ENCODE measurements at regions of chr12 and their contacts with region 1.

Region 1: DNA sequence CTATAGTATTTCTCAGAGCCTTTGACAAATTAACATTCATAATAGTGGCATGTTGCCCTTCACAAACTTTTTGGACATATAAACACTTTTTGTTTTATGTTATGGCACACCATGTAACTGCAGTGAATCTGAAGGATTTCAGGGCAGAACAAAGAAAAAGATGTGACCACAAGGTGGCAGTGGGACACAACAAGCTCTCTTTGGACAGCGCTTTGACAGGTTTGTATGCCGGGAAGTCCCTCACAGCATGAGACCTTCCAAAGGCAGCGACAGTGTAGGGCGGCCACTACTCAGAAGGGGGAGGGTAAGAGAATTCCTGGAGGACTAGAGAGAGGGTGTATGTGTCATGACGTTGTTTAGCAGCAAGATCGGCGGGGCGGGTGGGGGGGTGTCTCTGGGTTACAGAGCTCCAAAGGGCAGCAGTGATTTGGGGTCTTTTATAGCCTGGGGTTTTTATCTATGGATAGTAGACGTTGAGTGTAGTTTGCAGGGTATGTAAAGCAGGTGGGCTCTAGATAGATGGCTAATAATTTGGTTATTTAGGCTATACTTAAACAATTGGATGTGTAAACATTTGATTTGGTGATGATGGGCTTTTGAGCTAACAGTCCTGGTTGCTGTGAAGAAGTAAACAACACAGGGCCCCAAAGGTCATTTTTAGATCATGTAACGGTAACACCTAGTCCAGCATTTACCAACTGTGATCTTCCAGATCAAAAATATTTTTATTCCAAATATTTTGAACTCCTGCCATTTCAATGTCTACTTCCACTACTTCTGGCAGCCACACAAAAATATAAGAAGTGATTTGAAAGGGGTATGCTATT is 22.9 kb downstream of the ETFBKMT start:
- DNase-seq: peak; percentile 89
- ATAC-seq: peak; percentile 71
- H3K4me3 ChIP-seq: no peak overlapping the region
- H3K4me3 Mint-ChIP-seq: peak overlapping the region; percentile 69
- H3K27ac ChIP-seq: peak overlapping the region; percentile 50 to 73
- H3K27ac Mint-ChIP-seq: peak overlapping the region; percentile 93
- H3K4me1 ChIP-seq: peaks cover 19 to 30% of the 10 kb centered on the region in 2 donors
- H3K4me1 Mint-ChIP-seq: peaks cover 31% of the 10 kb centered on the region
- H3K27me3 ChIP-seq: no peaks in the 10 kb centered on the region
- H3K27me3 Mint-ChIP-seq: no peaks in the 10 kb centered on the region
- CTCF ChIP-seq: peak; percentile 88

Region 2: DNA sequence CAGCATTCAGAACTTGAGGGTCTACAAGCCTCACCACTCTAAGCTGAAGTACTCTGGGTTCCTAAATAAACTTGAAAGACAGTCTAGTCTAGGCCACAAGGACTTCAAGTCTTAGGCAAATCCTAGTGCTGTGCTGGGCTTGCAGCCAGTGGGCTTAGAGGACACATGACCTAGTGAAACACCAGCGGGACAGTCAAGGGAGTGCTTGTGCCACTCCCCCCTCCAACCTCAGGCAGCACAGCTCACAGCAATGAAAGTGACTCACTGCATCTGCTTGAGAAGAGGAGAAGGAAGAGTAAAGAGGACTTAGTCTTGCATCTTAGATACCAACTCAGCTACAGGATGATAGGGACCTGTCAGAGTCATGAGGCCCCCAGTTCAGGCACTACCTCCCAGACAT is 1424.7 kb before region 1 on chr12:
- CTCF ChIA-PET with region 1: no interaction called
- POLR2A ChIA-PET with region 1: no interaction called
- intact Hi-C with region 1: no loop called
- DNase-seq: no peak
- ATAC-seq: no peak
- H3K4me3 ChIP-seq: no peak overlapping the region
- H3K4me3 Mint-ChIP-seq: no peak overlapping the region
- H3K27ac ChIP-seq: no peak overlapping the region
- H3K27ac Mint-ChIP-seq: no peak overlapping the region
- H3K4me1 ChIP-seq: no peaks in the 10 kb centered on the region
- H3K4me1 Mint-ChIP-seq: no peaks in the 10 kb centered on the region
- H3K27me3 ChIP-seq: no peaks in the 10 kb centered on the region
- H3K27me3 Mint-ChIP-seq: no peaks in the 10 kb centered on the region
- CTCF ChIP-seq: no peak

Region 3: DNA sequence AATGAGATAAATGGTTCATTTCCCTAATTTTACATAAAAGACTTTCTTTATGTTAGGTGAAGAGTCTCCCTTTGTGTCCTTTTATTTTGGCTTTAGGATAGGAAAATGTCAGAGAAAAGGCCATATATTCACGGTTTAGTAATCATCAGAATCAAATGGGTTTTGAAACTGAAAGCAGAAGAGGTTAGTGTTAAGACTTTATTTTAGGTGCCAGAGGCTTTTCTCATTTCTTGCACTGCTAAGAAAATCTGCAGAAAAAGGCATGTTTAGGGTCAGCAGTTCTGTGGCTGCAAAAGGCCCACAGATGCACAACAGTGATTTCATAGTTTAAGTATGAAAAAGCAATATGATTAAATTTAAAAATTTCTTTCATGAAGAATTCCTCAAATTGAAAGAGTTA is 276.0 kb before region 1 on chr12:
- CTCF ChIA-PET with region 1: interaction called, 10 read pairs
- POLR2A ChIA-PET with region 1: no interaction called
- intact Hi-C with region 1: no loop called
- DNase-seq: peak; percentile 55
- ATAC-seq: peak; percentile 26
- H3K4me3 ChIP-seq: no peak overlapping the region
- H3K4me3 Mint-ChIP-seq: peak overlapping the region; percentile 40
- H3K27ac ChIP-seq: peak overlapping the region; percentile 50 to 51
- H3K27ac Mint-ChIP-seq: peak overlapping the region; percentile 28
- H3K4me1 ChIP-seq: peaks cover 23 to 44% of the 10 kb centered on the region in 2 donors
- H3K4me1 Mint-ChIP-seq: peaks cover 24% of the 10 kb centered on the region
- H3K27me3 ChIP-seq: no peaks in the 10 kb centered on the region
- H3K27me3 Mint-ChIP-seq: no peaks in the 10 kb centered on the region
- CTCF ChIP-seq: no peak

Region 4: DNA sequence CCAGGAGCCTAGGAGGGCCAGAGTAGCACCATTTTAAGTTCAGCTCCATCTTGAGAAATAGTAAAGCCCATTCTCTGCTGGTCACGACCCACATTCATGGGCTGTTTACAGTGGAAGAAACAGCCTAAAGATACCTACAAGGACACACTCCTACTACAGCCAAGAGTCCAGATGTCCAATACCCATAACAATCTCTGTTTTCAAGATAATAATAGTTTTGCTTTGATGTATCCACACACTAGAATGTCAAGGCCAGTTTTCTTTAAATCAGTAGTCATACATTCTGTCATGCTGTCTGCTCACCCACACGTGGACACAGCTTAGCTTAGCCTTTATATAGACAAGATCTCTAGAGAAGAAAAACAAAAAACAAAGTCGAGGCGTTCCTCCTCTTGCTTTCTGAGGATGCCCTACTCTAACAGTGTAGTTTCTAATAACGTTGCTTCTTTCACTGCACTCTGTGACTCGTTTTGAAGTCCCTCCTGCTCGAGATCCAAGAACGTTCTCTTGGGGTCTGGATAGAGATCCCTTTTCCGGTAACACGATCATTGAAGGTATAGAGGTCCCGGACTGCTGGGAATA is 40.7 kb before region 1 on chr12:
- CTCF ChIA-PET with region 1: no interaction called
- POLR2A ChIA-PET with region 1: no interaction called
- intact Hi-C with region 1: no loop called
- DNase-seq: no peak
- ATAC-seq: no peak
- H3K4me3 ChIP-seq: no peak overlapping the region
- H3K4me3 Mint-ChIP-seq: no peak overlapping the region
- H3K27ac ChIP-seq: no peak overlapping the region
- H3K27ac Mint-ChIP-seq: no peak overlapping the region
- H3K4me1 ChIP-seq: peaks cover 17 to 26% of the 10 kb centered on the region in 2 donors
- H3K4me1 Mint-ChIP-seq: peaks cover 21% of the 10 kb centered on the region
- H3K27me3 ChIP-seq: no peaks in the 10 kb centered on the region
- H3K27me3 Mint-ChIP-seq: no peaks in the 10 kb centered on the region
- CTCF ChIP-seq: no peak

Region 5: GRCh38 chr12:31705621-31706020 is 23.3 kb after region 1 on chr12:
- CTCF ChIA-PET with region 1: no interaction called
- POLR2A ChIA-PET with region 1: no interaction called
- intact Hi-C with region 1: no loop called
- DNase-seq: no peak
- ATAC-seq: no peak
- H3K4me3 ChIP-seq: no peak overlapping the region
- H3K4me3 Mint-ChIP-seq: no peak overlapping the region
- H3K27ac ChIP-seq: no peak overlapping the region
- H3K27ac Mint-ChIP-seq: peak overlapping the region; percentile 64
- H3K4me1 ChIP-seq: peaks cover 6 to 8% of the 10 kb centered on the region in 2 donors
- H3K4me1 Mint-ChIP-seq: peaks cover 22% of the 10 kb centered on the region
- H3K27me3 ChIP-seq: no peaks in the 10 kb centered on the region
- H3K27me3 Mint-ChIP-seq: no peaks in the 10 kb centered on the region
- CTCF ChIP-seq: no peak

Region 6: GRCh38 chr12:31742891-31743290 is 60.5 kb after region 1 on chr12:
- CTCF ChIA-PET with region 1: interaction called, 9 read pairs
- POLR2A ChIA-PET with region 1: interaction called, 10 read pairs
- intact Hi-C with region 1: loop called (anchors 2 kb)
- DNase-seq: peak; percentile 86
- ATAC-seq: peak; percentile 64
- H3K4me3 ChIP-seq: peak overlapping the region in 1 of 5 experiments; percentile 21
- H3K4me3 Mint-ChIP-seq: peak overlapping the region; percentile 35
- H3K27ac ChIP-seq: peak overlapping the region; percentile 2 to 68
- H3K27ac Mint-ChIP-seq: peak overlapping the region; percentile 69
- H3K4me1 ChIP-seq: peaks cover 80 to 81% of the 10 kb centered on the region in 2 donors
- H3K4me1 Mint-ChIP-seq: peaks cover 77% of the 10 kb centered on the region
- H3K27me3 ChIP-seq: no peaks in the 10 kb centered on the region
- H3K27me3 Mint-ChIP-seq: no peaks in the 10 kb centered on the region
- CTCF ChIP-seq: no peak

Region 7: GRCh38 chr12:31783996-31784645 is 101.8 kb after region 1 on chr12:
- CTCF ChIA-PET with region 1: no interaction called
- POLR2A ChIA-PET with region 1: no interaction called
- intact Hi-C with region 1: no loop called
- DNase-seq: no peak
- ATAC-seq: no peak
- H3K4me3 ChIP-seq: no peak overlapping the region
- H3K4me3 Mint-ChIP-seq: no peak overlapping the region
- H3K27ac ChIP-seq: no peak overlapping the region
- H3K27ac Mint-ChIP-seq: peak overlapping the region; percentile 22
- H3K4me1 ChIP-seq: peaks cover 0 to 1% of the 10 kb centered on the region in 2 donors
- H3K4me1 Mint-ChIP-seq: peaks cover 20% of the 10 kb centered on the region
- H3K27me3 ChIP-seq: no peaks in the 10 kb centered on the region
- H3K27me3 Mint-ChIP-seq: no peaks in the 10 kb centered on the region
- CTCF ChIP-seq: no peak

Region 8: DNA sequence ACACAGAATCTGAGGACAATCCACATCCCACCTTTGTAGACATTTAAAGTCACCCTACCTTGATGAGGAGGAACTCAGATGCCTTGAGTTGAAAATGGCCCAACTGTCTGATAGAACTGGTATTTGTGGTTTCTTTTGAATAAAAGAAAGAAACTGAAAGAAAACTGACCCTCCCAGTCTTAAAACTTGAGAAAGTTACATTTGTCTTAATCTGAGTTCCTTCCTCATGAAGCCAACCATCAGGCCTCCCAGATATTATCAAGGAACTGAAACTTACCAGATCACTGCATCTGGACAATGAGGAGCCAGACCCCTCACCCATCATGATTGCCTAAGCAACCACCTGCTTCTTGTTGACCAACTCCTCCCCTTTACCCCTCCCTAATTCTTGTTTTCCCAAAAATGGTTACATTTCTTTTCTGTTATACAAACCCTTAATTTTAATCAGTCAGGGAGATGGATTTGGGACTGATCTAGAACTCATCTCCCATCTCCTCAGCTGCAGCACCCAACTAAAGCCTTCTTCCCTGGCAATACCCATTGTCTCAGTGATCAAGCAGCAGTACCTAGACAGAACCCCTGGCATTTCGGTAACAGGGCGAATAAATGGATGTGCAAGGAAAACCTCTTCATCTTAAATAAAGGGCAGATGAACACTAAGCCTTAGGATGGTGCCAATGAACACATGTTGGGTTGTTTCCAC is 204.9 kb after region 1 on chr12:
- CTCF ChIA-PET with region 1: interaction called, 5 read pairs
- POLR2A ChIA-PET with region 1: interaction called, 4 read pairs
- intact Hi-C with region 1: loop called (anchors 2 kb)
- DNase-seq: peak; percentile 74
- ATAC-seq: peak; percentile 73
- H3K4me3 ChIP-seq: peak overlapping the region; percentile 60 to 93 (median 69)
- H3K4me3 Mint-ChIP-seq: peak overlapping the region; percentile 90
- H3K27ac ChIP-seq: peak overlapping the region; percentile 76 to 86
- H3K27ac Mint-ChIP-seq: peak overlapping the region; percentile 98
- H3K4me1 ChIP-seq: peaks cover 41 to 62% of the 10 kb centered on the region in 2 donors
- H3K4me1 Mint-ChIP-seq: peaks cover 72% of the 10 kb centered on the region
- H3K27me3 ChIP-seq: no peaks in the 10 kb centered on the region
- H3K27me3 Mint-ChIP-seq: no peaks in the 10 kb centered on the region
- CTCF ChIP-seq: no peak

Region 9: DNA sequence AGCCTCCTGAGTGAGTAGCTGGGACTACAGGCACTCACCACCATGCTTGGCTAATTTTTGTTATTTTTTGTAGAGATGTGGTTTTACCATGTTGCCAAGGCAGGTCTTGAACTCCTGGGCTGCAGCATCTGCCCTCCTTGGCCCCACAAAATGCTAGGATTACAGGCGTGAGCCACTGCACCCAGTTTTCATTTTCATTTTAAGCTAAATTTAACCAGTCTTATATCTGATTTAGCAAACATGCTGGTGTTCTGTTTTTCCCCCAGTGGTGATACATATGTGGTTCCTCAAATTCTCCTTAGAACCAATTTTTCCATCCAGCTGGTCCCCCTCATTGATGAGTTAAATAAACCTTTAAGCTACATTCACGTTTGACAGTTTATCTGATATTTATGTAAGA is 380.5 kb after region 1 on chr12:
- CTCF ChIA-PET with region 1: interaction called, 10 read pairs
- POLR2A ChIA-PET with region 1: no interaction called
- intact Hi-C with region 1: loop called (anchors 1 kb)
- DNase-seq: peak; percentile 8
- ATAC-seq: no peak
- H3K4me3 ChIP-seq: no peak overlapping the region
- H3K4me3 Mint-ChIP-seq: no peak overlapping the region
- H3K27ac ChIP-seq: no peak overlapping the region
- H3K27ac Mint-ChIP-seq: no peak overlapping the region
- H3K4me1 ChIP-seq: peaks cover 10 to 12% of the 10 kb centered on the region in 2 donors
- H3K4me1 Mint-ChIP-seq: peaks cover 13% of the 10 kb centered on the region
- H3K27me3 ChIP-seq: no peaks in the 10 kb centered on the region
- H3K27me3 Mint-ChIP-seq: no peaks in the 10 kb centered on the region
- CTCF ChIP-seq: no peak

Region 10: GRCh38 chr12:32302218-32303173 is 620.1 kb after region 1 on chr12:
- CTCF ChIA-PET with region 1: interaction called, 5 read pairs
- POLR2A ChIA-PET with region 1: no interaction called
- intact Hi-C with region 1: loop called (anchors 1 kb)
- DNase-seq: peak; percentile 38
- ATAC-seq: peak; percentile 96
- H3K4me3 ChIP-seq: no peak overlapping the region
- H3K4me3 Mint-ChIP-seq: peak overlapping the region; percentile 57
- H3K27ac ChIP-seq: peak overlapping the region; percentile 20 to 75
- H3K27ac Mint-ChIP-seq: peak overlapping the region; percentile 70
- H3K4me1 ChIP-seq: peaks cover 23 to 26% of the 10 kb centered on the region in 2 donors
- H3K4me1 Mint-ChIP-seq: peaks cover 30% of the 10 kb centered on the region
- H3K27me3 ChIP-seq: no peaks in the 10 kb centered on the region
- H3K27me3 Mint-ChIP-seq: no peaks in the 10 kb centered on the region
- CTCF ChIP-seq: peak; percentile 78

Measured in B cell (primary cell).